ENCODE measurements at regions of chr10 and their contacts with region 1.

Region 1: DNA sequence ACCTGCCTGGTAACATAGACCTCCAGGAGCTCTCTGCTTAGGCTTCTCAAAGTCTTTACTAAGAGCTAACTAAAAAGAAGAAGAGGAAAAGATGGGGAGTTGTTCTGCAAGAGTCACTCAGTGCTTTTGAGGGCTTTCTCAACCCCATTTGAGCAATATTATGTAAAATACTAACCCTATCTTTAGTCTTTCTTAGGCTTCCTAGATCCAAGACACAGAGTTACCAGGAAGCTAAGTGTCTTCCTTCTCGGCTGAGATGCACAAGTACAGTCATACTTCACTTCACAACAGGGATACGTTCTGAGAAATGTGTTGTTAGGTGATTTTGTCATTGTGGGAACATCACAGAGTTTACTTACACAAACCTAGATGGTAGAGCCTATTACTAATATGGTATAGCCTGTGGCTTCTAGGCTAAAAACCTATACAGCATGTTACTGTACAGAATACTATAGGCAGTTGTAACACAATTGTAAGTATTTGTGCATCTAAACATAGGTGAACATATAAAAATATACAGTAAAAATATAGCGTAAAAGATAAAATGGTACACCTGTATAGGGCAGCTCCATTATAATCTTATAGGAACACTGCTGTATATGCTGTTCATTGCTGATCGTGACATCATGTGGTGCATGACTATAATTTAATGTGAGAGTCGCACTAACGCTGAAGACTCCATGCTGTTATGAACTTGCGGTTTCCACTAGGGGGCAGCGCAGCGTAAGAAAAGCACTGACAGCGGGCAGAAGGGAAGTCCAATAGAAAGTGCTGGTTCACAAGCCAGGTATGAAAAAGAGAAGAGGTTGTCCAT is 16.3 kb downstream of the ANKRD22 start:
- DNase-seq: peak; percentile 72 to 93 (median 83)
- ATAC-seq: peak; percentile 88 to 93 (median 90)
- H3K4me3 ChIP-seq: no peak overlapping the region
- H3K4me3 Mint-ChIP-seq: no peak overlapping the region
- H3K27ac ChIP-seq: no peak overlapping the region
- H3K27ac Mint-ChIP-seq: no peak overlapping the region
- H3K4me1 ChIP-seq: peaks cover 20 to 37% of the 10 kb centered on the region in 2 experiments
- H3K4me1 Mint-ChIP-seq: peaks cover 30 to 33% (median 31%) of the 10 kb centered on the region in 3 donors
- H3K27me3 ChIP-seq: no peaks in the 10 kb centered on the region
- H3K27me3 Mint-ChIP-seq: no peaks in the 10 kb centered on the region

Region 2: DNA sequence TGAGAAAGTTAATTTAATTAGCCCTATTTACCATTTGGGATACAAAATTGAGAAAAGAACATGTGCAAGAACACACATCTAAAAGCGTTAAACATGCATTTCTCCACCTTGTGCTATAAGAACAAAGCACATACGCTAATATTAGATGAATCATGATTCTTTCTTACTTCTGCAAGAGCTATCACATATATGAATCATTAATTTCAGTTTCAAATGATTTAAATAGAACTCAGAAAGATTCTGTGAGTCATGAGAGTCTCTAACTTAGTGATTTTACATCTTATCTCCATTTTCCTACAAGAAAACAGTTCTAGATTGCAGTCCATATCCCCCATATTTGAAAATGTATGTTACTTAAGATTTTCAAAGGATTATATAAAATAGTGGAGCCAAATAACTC is 426.1 kb before region 1 on chr10:
- CTCF ChIA-PET with region 1: no interaction called
- POLR2A ChIA-PET with region 1: no interaction called
- DNase-seq: no peak
- ATAC-seq: no peak
- H3K4me3 ChIP-seq: no peak overlapping the region
- H3K4me3 Mint-ChIP-seq: no peak overlapping the region
- H3K27ac ChIP-seq: no peak overlapping the region
- H3K27ac Mint-ChIP-seq: no peak overlapping the region
- H3K4me1 ChIP-seq: peaks cover 0 to 2% of the 10 kb centered on the region in 2 experiments
- H3K4me1 Mint-ChIP-seq: no peaks in the 10 kb centered on the region
- H3K27me3 ChIP-seq: no peaks in the 10 kb centered on the region
- H3K27me3 Mint-ChIP-seq: no peaks in the 10 kb centered on the region

Region 3: DNA sequence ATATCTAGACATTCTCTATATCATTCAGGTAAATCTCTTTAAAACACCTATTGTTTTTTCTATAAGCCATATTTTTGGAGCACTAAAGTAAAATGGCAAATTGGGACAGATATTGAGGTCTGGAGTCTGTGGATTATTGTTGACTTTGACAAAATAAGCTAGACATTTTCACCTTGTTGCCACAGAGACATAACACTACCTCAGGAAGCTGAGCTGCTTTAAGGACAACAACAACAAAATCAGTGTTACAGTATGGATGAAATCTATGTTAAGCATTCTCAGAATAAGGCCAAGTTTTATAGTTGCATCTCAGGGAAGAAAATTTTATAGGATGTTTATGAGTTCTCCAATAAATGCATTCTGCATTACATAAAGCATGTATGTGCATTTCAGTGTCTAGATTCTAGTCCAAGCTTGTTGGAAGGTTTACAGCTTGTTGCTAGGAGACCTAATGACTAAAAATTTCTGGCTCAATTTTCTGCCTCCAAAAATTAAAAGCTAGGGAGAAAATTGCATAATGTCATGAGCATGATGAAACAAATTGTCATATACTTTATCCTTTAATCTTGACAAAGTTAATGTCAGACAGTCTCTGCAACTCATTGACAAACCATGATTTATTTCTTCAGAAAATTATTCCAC is 14.4 kb before region 1 on chr10:
- CTCF ChIA-PET with region 1: interaction called, 17 to 20 read pairs
- POLR2A ChIA-PET with region 1: interaction called in 1 of 2 experiments, 3 read pairs
- DNase-seq: no peak
- ATAC-seq: no peak
- H3K4me3 ChIP-seq: no peak overlapping the region
- H3K4me3 Mint-ChIP-seq: no peak overlapping the region
- H3K27ac ChIP-seq: no peak overlapping the region
- H3K27ac Mint-ChIP-seq: no peak overlapping the region
- H3K4me1 ChIP-seq: peaks cover 10 to 34% of the 10 kb centered on the region in 2 experiments
- H3K4me1 Mint-ChIP-seq: peaks cover 53 to 56% (median 54%) of the 10 kb centered on the region in 3 donors
- H3K27me3 ChIP-seq: no peaks in the 10 kb centered on the region
- H3K27me3 Mint-ChIP-seq: no peaks in the 10 kb centered on the region

Region 4: GRCh38 chr10:88853155-88853881 is 18.0 kb after region 1 on chr10:
- CTCF ChIA-PET with region 1: interaction called, 3 to 10 read pairs
- POLR2A ChIA-PET with region 1: interaction called in 1 of 2 experiments, 3 read pairs
- DNase-seq: no peak
- ATAC-seq: no peak
- H3K4me3 ChIP-seq: no peak overlapping the region
- H3K4me3 Mint-ChIP-seq: no peak overlapping the region
- H3K27ac ChIP-seq: no peak overlapping the region
- H3K27ac Mint-ChIP-seq: no peak overlapping the region
- H3K4me1 ChIP-seq: peaks cover 0 to 3% of the 10 kb centered on the region in 2 experiments
- H3K4me1 Mint-ChIP-seq: peaks cover 7 to 8% (median 7%) of the 10 kb centered on the region in 3 donors
- H3K27me3 ChIP-seq: no peaks in the 10 kb centered on the region
- H3K27me3 Mint-ChIP-seq: no peaks in the 10 kb centered on the region

Region 5: DNA sequence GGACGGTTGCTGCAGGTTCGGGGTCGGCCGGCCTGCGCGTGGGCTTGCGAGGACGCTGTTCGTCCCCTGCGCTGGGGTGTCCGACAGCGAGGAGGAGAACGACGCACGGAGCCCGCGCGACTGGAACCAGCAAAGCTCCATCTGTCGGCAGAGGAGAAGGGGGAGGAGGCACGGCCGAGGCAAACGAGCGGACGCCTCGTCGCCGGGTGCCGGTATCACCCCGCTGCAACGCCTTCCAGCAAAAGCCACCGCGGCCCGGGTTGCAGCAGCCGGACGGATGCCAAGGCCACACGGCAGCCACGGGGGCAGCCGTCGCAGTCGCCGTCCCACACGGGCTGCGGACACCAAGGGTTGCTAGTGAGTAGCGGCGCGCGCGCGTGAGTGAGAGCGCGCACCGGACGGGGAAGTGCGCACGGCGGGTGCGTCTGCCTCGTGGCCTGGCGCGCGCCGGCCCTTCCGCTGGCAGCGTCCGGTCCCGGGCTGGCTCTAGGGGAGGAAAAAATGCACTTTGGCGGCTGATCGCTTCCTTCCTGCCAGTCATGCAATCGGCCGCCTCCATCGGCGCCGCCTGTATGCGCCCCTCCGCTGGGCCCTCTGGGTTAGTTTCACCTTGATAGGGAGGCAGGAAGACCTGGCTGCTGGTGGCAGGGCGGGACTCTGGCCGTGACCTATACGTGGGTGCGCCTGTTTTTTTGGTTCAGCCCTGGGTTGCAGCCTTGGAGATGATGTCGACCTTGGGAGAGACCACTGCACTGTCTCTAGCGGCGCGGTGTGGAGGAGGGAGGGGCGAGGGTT is 45.2 kb after region 1 on chr10:
- CTCF ChIA-PET with region 1: interaction called in 1 of 2 experiments, 15 read pairs
- POLR2A ChIA-PET with region 1: no interaction called
- DNase-seq: peak; percentile 37 to 79 (median 61)
- ATAC-seq: peak; percentile 77 to 81 (median 80)
- H3K4me3 ChIP-seq: peak overlapping the region; percentile 70 to 87
- H3K4me3 Mint-ChIP-seq: peak overlapping the region; percentile 97 to 98 (median 97)
- H3K27ac ChIP-seq: peak overlapping the region; percentile 81
- H3K27ac Mint-ChIP-seq: peak overlapping the region; percentile 88 to 94
- H3K4me1 ChIP-seq: peaks cover 17 to 41% of the 10 kb centered on the region in 2 experiments
- H3K4me1 Mint-ChIP-seq: peaks cover 64 to 70% (median 68%) of the 10 kb centered on the region in 3 donors
- H3K27me3 ChIP-seq: no peaks in the 10 kb centered on the region
- H3K27me3 Mint-ChIP-seq: no peaks in the 10 kb centered on the region

Region 6: GRCh38 chr10:89171996-89172395 is 336.7 kb after region 1 on chr10:
- CTCF ChIA-PET with region 1: no interaction called
- POLR2A ChIA-PET with region 1: no interaction called
- DNase-seq: no peak
- ATAC-seq: no peak
- H3K4me3 ChIP-seq: no peak overlapping the region
- H3K4me3 Mint-ChIP-seq: no peak overlapping the region
- H3K27ac ChIP-seq: no peak overlapping the region
- H3K27ac Mint-ChIP-seq: no peak overlapping the region
- H3K4me1 ChIP-seq: no peaks in the 10 kb centered on the region
- H3K4me1 Mint-ChIP-seq: no peaks in the 10 kb centered on the region
- H3K27me3 ChIP-seq: no peaks in the 10 kb centered on the region
- H3K27me3 Mint-ChIP-seq: peaks cover 15 to 17% of the 10 kb centered on the region in 2 donors

Measured in T-cell (primary cell).